WTC11 (cell line): ENCODE measurements at regions of chr22 and their contacts with region 1.

Region 1: DNA sequence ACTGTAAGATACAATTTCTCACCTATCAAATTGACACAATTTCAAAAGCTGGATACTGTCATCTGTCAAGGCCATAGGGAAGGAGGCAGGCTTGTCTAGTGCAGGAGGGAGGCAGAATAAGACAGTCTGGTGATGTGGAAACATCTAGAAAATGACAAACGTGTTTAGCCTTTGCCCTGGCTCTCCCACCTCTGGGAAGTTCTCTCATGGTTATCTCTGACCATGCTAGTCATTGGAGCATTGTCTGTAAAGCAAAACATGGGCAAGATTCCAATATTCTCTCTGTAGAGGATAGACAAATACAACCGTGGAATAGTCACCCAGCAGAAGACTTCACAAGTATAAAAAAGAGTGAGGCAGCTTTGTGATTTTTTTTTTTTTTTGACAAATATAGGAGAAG is 9.1 kb upstream of the SERHL2 start:
- DNase-seq: no peak
- ATAC-seq: no peak
- H3K4me3 Mint-ChIP-seq: no peak overlapping the region
- H3K27ac Mint-ChIP-seq: no peak overlapping the region
- H3K4me1 Mint-ChIP-seq: peaks cover 10% of the 10 kb centered on the region
- H3K27me3 Mint-ChIP-seq: peaks cover 55% of the 10 kb centered on the region
- CTCF ChIP-seq: no peak

Region 2: DNA sequence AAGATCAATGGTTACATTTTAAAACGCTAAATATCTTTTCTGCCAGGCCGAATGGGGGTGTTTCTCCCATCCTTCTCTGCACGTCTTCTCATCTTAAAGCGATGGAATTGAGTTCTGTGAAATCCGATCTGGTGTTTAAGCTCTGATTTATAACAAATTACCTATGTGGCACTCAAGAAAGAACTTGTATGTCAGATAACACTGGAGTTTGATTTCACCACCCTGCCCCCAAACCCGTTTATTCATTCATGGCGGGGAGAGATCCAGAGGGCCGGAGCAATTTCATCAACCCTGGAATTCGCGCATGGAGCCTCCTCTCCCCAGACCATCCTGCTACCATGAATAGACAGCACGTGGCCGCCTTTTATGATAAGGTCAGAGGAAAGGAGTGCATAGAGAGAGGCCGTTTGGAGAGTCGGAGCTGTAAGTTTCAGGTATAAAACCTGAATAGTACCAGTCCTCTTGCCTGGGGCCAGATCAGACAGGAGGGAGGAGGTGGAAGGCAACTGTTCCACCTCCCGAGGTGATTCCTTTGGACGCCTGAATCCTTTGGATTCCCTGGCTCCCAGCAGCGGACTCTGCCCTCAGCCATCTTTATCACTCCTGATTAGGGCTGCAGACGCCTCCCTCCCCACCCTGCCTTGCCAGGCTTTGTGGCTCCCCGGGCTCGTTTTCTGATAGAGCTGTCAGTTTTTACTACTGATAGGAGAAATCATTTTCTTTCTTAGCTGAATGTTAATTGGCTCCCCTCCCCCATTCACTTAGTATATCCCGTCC is 85.2 kb before region 1 on chr22:
- CTCF ChIA-PET with region 1: no interaction called
- POLR2A ChIA-PET with region 1: no interaction called
- DNase-seq: no peak
- ATAC-seq: peak; percentile 56
- H3K4me3 Mint-ChIP-seq: no peak overlapping the region
- H3K27ac Mint-ChIP-seq: no peak overlapping the region; the same call in 1 of the 2 replicates
- H3K4me1 Mint-ChIP-seq: peaks cover 34% of the 10 kb centered on the region
- H3K27me3 Mint-ChIP-seq: peaks cover 23% of the 10 kb centered on the region
- CTCF ChIP-seq: no peak

Region 3: GRCh38 chr22:43451371-43452050 is 906.8 kb after region 1 on chr22:
- CTCF ChIA-PET with region 1: no interaction called
- POLR2A ChIA-PET with region 1: interaction called, 10 read pairs
- DNase-seq: no peak
- ATAC-seq: no peak
- H3K4me3 Mint-ChIP-seq: no peak overlapping the region
- H3K27ac Mint-ChIP-seq: no peak overlapping the region
- H3K4me1 Mint-ChIP-seq: peaks cover 9% of the 10 kb centered on the region
- H3K27me3 Mint-ChIP-seq: no peaks in the 10 kb centered on the region
- CTCF ChIP-seq: no peak